A549 (cell line): ENCODE measurements at regions of chr1 and their contacts with region 1.

Region 1: GRCh38 chr1:154911691-154912550 is 24.6 kb downstream of the PMVK start:
- DNase-seq: no peak
- ATAC-seq: no peak
- H3K4me3 ChIP-seq: no peak overlapping the region
- H3K27ac ChIP-seq: no peak overlapping the region
- H3K4me1 ChIP-seq: no peaks in the 10 kb centered on the region
- CTCF ChIP-seq: no peak
- EP300 ChIP-seq: no peak
- POLR2A ChIP-seq: no peak
- RAD21 ChIP-seq: no peak

Region 2: DNA sequence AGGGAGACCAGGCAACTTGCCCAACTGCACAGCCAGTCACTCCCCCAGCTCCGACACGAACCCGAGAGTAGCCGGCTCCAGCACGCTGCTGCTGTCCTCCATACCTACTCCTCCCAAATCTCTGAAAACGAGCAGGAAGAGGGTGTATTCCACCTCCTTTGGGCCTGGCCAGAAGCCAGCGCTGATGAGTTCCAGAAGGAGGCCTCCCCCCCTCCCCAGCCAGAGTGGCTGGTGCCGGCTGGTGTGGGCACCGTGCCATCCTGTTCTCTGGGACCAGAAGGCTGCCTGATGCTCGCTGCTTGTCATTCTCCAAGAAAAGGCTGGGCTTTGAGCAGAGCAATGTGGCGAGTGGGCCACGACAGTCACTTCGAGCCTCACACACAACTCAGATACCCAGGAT is 64.0 kb before region 1 on chr1:
- CTCF ChIA-PET with region 1: no interaction called
- POLR2A ChIA-PET with region 1: no interaction called
- DNase-seq: no peak
- ATAC-seq: no peak
- H3K4me3 ChIP-seq: no peak overlapping the region
- H3K27ac ChIP-seq: no peak overlapping the region
- H3K4me1 ChIP-seq: no peaks in the 10 kb centered on the region
- CTCF ChIP-seq: no peak
- EP300 ChIP-seq: no peak
- POLR2A ChIP-seq: no peak
- RAD21 ChIP-seq: no peak

Region 3: GRCh38 chr1:154884869-154885701 is 26.8 kb before region 1 on chr1:
- CTCF ChIA-PET with region 1: no interaction called
- POLR2A ChIA-PET with region 1: no interaction called
- DNase-seq: no peak
- ATAC-seq: no peak
- H3K4me3 ChIP-seq: no peak overlapping the region
- H3K27ac ChIP-seq: no peak overlapping the region
- H3K4me1 ChIP-seq: peaks cover 4% of the 10 kb centered on the region; the same call in 1 of the 3 replicates
- CTCF ChIP-seq: no peak
- EP300 ChIP-seq: no peak
- POLR2A ChIP-seq: no peak
- RAD21 ChIP-seq: no peak

Region 4: DNA sequence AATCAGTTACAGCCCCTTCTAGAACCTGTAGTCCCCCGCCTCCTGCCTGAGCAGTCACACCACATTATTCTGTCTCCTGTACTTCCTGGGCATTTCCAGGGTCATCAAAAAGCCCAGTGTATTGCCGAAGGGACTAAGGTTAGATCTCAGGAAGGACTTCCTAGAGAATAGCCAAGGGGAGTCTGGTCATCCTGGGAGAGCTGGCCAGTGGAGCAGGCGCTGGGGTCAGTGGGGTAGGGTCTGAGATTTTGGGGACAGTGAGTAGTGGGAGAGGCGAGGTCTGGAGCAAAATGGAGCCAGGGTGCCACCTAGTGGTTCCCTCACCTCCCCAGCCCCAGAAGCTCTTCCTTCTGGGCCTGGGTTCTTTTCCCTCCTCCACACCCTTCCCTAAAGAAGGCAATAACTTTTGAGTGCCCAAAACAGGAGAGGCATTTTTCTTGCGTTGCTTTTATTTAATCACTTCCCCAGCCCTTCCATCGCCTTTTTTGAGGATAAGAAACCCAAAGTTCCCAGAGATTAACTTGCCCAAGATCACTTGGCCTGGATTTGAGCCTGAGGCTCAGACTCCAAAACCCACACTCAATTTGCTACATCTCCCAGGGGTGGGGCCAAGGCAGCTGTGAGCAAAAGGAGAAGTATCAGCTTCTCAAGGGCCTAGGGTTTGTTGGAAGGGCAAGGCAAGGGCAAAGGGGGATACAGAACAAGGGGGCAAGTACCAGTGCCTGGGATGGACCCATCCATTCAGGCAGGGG is 31.9 kb after region 1 on chr1:
- CTCF ChIA-PET with region 1: interaction called, 14 read pairs
- POLR2A ChIA-PET with region 1: no interaction called
- DNase-seq: peak; percentile 42 to 70
- ATAC-seq: peak; percentile 71 to 85; a peak in 5 of 6 replicates
- H3K4me3 ChIP-seq: no peak overlapping the region
- H3K27ac ChIP-seq: no peak overlapping the region
- H3K4me1 ChIP-seq: no peaks in the 10 kb centered on the region
- CTCF ChIP-seq: peak; percentile 85
- EP300 ChIP-seq: no peak
- POLR2A ChIP-seq: no peak
- RAD21 ChIP-seq: peak; percentile 81 to 84